ENCODE measurements at regions of chr6 and their contacts with region 1.

Region 1: GRCh38 chr6:45278367-45278766 is 49.8 kb upstream of the RUNX2 start:
- DNase-seq: no peak
- ATAC-seq: no peak
- H3K4me3 ChIP-seq: no peak overlapping the region
- H3K27ac ChIP-seq: no peak overlapping the region
- H3K4me1 ChIP-seq: no peaks in the 10 kb centered on the region
- H3K27me3 ChIP-seq: no peaks in the 10 kb centered on the region
- CTCF ChIP-seq: no peak
- POLR2A ChIP-seq: no peak

Region 2: GRCh38 chr6:45212976-45213375 is 65.4 kb before region 1 on chr6:
- intact Hi-C with region 1: no loop called
- DNase-seq: no peak
- ATAC-seq: no peak
- H3K4me3 ChIP-seq: no peak overlapping the region
- H3K27ac ChIP-seq: no peak overlapping the region
- H3K4me1 ChIP-seq: no peaks in the 10 kb centered on the region
- H3K27me3 ChIP-seq: no peaks in the 10 kb centered on the region
- CTCF ChIP-seq: no peak
- POLR2A ChIP-seq: no peak

Region 3: DNA sequence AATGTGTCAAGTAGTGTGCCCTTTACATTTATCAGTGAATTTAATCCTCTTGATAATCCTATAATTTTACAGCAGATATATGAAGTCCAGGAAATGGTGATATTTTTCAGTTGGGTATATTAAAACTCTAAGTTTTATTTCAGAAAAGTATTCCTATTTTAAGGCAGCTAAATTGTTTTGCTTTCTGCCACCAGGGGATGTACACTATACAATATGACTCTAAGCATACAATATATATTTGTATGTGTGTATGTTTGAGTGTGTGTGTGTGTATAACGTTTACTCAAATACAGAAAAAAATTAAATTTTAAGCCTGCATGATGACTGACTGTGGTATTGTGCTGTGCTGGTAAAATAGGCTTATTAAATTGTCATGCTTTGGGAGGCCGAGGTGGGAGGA is 52.3 kb before region 1 on chr6:
- intact Hi-C with region 1: no loop called
- DNase-seq: no peak
- ATAC-seq: no peak
- H3K4me3 ChIP-seq: no peak overlapping the region
- H3K27ac ChIP-seq: no peak overlapping the region
- H3K4me1 ChIP-seq: no peaks in the 10 kb centered on the region
- H3K27me3 ChIP-seq: no peaks in the 10 kb centered on the region
- CTCF ChIP-seq: no peak
- POLR2A ChIP-seq: no peak

Region 4: GRCh38 chr6:46184114-46184513 is 905.7 kb after region 1 on chr6:
- intact Hi-C with region 1: loop called in 1 of 10 experiments (anchors 10 kb)
- DNase-seq: no peak
- ATAC-seq: no peak
- H3K4me3 ChIP-seq: no peak overlapping the region
- H3K27ac ChIP-seq: no peak overlapping the region
- H3K4me1 ChIP-seq: peaks cover 0 to 8% (median 4%) of the 10 kb centered on the region in 12 donors
- H3K27me3 ChIP-seq: no peaks in the 10 kb centered on the region
- CTCF ChIP-seq: peak in 1 of 12 donors; percentile 10
- POLR2A ChIP-seq: no peak